ENCODE measurements at regions of chr7 and their contacts with region 1.

Region 1: DNA sequence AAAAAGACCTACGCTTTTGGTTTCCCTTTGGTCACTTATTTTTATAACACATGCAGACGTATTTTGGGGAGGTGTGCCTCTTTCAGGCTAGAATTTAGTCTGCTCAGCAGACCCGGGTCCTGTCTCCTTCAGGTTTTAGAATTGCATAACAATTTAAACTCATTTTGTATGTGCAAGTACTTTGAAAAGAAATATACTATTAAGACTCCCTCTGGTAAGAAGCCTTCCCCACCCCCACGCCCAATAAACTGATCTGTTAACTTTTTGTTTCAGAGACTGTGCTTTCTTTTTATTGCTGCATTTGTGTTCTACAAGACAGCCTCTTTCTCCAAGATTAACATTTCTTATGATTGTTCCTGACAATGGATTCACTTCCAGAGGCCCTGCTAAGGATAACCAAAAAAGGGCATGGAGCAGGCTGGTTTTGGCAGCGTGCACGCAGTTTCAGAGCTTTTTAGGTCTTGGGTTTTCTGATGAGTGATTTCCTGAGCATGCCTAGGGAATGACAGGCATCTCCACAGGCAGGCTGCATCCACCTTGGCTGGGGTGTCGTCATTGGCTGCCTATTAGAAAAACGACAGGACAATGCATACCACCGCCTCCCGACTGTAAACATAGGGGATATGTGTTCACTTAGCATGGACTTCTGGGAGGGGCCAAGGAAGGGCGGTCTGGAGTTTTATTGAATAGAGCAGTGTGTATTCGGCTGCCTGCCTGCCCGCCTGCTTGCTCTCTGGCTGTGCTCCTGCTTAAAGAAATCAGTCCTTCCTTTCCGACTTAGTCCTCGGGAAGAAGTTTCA is at the start of gene CALD1:
- DNase-seq: peak; percentile 69 to 76 (median 75)
- H3K4me3 ChIP-seq: peak within 1 kb of the TSS; percentile 71
- H3K27ac ChIP-seq: peak within 1 kb of the TSS; percentile 51 to 82
- H3K4me1 ChIP-seq: peaks cover 13% of the 10 kb centered on the region
- H3K27me3 ChIP-seq: no peaks in the 10 kb centered on the region
- CTCF ChIP-seq: no peak
- EP300 ChIP-seq: no peak
- POLR2A ChIP-seq: peak; percentile 36
- total RNA-seq, gene CALD1: 306 to 697 (median 463) TPM

Region 2: GRCh38 chr7:134827889-134828288 is 48.7 kb after region 1 on chr7:
- intact Hi-C with region 1: loop called in 1 of 4 experiments (anchors 10 kb)
- DNase-seq: no peak
- H3K4me3 ChIP-seq: no peak overlapping the region
- H3K27ac ChIP-seq: peak overlapping the region in 1 of 2 donors; percentile 55
- H3K4me1 ChIP-seq: peaks cover 26% of the 10 kb centered on the region
- H3K27me3 ChIP-seq: no peaks in the 10 kb centered on the region
- CTCF ChIP-seq: no peak
- EP300 ChIP-seq: no peak
- POLR2A ChIP-seq: no peak

Region 3: DNA sequence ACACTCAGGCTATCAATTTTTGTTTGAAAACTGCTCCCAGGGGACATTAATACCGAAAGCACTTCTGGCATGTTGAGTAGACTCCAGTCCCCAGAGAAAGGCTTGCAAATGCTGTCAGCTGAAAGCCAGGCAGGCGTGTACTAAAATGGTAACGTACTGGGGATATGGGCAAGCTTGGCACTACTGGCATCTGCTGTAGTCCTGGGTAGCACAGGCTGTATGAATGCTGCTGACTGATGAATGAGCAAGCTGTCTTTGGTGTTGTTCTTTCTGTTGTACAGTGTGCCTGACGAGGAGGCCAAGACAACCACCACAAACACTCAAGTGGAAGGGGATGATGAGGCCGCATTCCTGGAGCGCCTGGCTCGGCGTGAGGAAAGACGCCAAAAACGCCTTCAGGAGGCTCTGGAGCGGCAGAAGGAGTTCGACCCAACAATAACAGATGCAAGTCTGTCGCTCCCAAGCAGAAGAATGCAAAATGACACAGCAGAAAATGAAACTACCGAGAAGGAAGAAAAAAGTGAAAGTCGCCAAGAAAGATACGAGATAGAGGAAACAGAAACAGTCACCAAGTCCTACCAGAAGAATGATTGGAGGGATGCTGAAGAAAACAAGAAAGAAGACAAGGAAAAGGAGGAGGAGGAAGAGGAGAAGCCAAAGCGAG is 153.7 kb after region 1 on chr7:
- intact Hi-C with region 1: loop called in 1 of 4 experiments (anchors 10 kb)
- DNase-seq: no peak
- H3K4me3 ChIP-seq: no peak overlapping the region
- H3K27ac ChIP-seq: peak overlapping the region in 1 of 2 donors; percentile 34
- H3K4me1 ChIP-seq: peaks cover 17% of the 10 kb centered on the region
- H3K27me3 ChIP-seq: no peaks in the 10 kb centered on the region
- CTCF ChIP-seq: no peak
- EP300 ChIP-seq: no peak
- POLR2A ChIP-seq: no peak

Measured in ovary (tissue), 10 donors.